ENCODE measurements at regions of chr2 and their contacts with region 1.

Region 1: DNA sequence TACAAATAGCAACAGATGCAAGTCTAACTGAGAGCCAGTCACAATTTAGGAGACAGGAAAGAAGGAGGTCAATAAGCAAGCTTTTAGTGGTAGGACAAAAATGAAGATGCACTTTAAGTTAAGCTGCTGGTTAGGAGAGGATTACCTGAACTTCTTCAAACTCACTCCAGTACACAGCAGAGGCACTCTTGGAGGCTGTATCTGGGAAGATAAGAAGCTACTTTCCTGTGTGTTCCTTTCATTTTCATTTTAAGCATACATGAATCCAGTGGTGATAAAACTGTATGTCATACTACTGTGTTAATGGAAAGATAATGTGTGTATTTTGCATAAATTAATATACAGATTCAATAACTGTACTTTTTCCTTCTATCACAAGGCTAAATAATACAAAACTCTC is 49.6 kb downstream of the HYCC2 start:
- DNase-seq: no peak
- ATAC-seq: no peak
- H3K4me3 ChIP-seq: no peak overlapping the region
- H3K27ac ChIP-seq: no peak overlapping the region
- H3K4me1 ChIP-seq: peaks cover 0 to 8% (median 0%) of the 10 kb centered on the region in 9 donors
- H3K27me3 ChIP-seq: no peaks in the 10 kb centered on the region
- CTCF ChIP-seq: no peak

Region 2: DNA sequence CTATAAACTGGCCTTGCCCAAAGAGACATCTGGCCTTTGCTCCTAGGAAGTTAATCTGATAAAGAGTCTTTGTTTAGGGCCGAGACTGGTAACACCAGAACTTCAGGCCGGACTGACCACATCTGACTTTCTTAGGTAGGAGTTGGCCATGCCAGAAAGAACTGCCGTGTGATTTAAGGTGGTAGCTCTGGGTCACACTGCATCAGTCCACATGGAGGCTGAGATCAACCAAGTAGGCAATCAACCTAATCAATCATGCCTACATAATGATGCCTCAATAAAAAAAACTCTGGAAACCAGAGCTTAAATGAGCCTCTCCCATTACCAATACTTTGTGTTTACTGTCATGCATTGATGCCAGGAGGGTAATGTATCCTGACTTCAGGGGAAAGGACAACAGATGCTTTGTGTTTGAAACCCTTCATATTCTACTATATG is 14.3 kb before region 1 on chr2:
- intact Hi-C with region 1: loop called in 1 of 10 experiments (anchors 1 kb)
- DNase-seq: no peak
- ATAC-seq: no peak
- H3K4me3 ChIP-seq: no peak overlapping the region
- H3K27ac ChIP-seq: no peak overlapping the region
- H3K4me1 ChIP-seq: no peaks in the 10 kb centered on the region
- H3K27me3 ChIP-seq: no peaks in the 10 kb centered on the region
- CTCF ChIP-seq: no peak